Cardiac septum (tissue), 1 donor: ENCODE measurements at regions of chr7 and their contacts with region 1.

Region 1: DNA sequence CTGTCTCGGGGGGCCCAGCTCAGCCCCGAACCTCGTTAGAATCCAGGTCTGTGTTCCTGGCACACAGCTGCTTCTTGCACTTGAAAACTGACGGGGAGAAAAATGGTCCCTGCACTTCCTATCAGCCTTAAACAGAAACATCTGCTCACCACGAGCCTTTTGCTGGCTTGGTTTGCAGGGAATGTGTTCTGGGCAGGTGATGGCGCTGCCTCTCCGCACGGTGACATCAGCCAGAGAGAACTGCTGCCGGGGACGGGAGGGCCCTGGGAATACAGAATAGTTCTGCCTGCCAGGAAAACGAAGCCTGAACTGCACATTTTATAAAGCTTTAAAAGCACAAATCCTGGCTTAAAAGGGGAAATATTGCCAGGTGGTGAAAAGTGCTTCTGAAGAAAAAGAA is 622.5 kb downstream of the TYW1 start:
- DNase-seq: peak; percentile 68

Region 2: GRCh38 chr7:67518580-67518979 is 100.6 kb before region 1 on chr7:
- intact Hi-C with region 1: loop called (anchors 2 kb)
- DNase-seq: peak; percentile 83

Region 3: GRCh38 chr7:67788669-67789068 is 169.5 kb after region 1 on chr7:
- intact Hi-C with region 1: no loop called
- DNase-seq: no peak